ENCODE measurements at regions of chr19 and their contacts with region 1.

Region 1: GRCh38 chr19:17766543-17767131 is 15.4 kb downstream of the FCHO1 start:
- DNase-seq: peak; percentile 88
- ATAC-seq: peak; percentile 91
- H3K4me3 ChIP-seq: peak overlapping the region; percentile 42 to 50
- H3K27ac ChIP-seq: peak overlapping the region; percentile 39; the same call in 1 of the 2 replicates
- H3K4me1 ChIP-seq: peaks cover 20 to 32% of the 10 kb centered on the region in 2 experiments
- H3K27me3 ChIP-seq: no peaks in the 10 kb centered on the region
- CTCF ChIP-seq: peak; percentile 81 to 94 (median 93)
- POLR2A ChIP-seq: no peak
- RAD21 ChIP-seq: peak; percentile 98

Region 2: DNA sequence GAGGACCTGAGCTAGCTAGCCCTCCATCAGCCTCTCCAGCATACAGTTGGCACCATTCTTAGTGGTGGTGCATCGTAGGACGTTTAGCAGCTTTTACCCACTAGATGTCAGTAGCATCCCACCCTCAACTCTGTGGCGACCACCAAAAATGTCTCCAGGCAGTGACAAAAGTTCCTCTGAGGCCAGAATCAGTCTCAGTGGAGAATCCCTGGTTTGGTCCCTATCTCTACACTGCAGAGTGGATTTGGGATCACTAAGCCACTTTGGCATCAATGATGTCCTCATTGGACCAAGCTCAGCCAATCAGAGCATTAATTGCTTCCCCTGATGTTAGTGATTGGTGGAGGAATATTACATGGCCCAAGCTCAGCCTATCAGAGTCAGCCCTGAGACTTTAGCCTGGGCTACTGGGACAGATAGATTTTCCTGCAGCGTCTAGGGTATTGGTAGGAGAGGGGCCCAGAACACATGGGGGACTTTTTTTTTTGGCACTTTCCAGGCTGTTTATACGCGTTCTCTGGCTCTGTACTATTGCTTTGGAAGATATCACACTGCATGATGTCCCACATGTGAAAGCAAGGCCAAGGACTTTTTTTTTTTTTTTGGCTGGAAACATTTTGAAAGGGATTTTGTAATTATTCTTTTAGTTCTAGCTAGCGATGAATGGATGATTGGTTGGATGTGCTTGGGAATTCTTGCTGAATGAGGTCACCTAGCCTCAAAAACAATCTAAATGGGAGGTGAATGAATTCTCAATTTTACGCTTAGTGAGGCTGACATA is 325.2 kb before region 1 on chr19:
- CTCF ChIA-PET with region 1: interaction called, 4 read pairs
- POLR2A ChIA-PET with region 1: no interaction called
- RAD21 ChIA-PET with region 1: no interaction called
- intact Hi-C with region 1: loop called (anchors 5 kb)
- DNase-seq: no peak
- ATAC-seq: peak; percentile 92
- H3K4me3 ChIP-seq: no peak overlapping the region
- H3K27ac ChIP-seq: no peak overlapping the region
- H3K4me1 ChIP-seq: no peaks in the 10 kb centered on the region
- H3K27me3 ChIP-seq: no peaks in the 10 kb centered on the region
- CTCF ChIP-seq: peak; percentile 48 to 61 (median 52); a peak in 5 of 6 replicates
- POLR2A ChIP-seq: no peak
- RAD21 ChIP-seq: peak; percentile 75

Region 3: GRCh38 chr19:17590877-17591276 is 175.8 kb before region 1 on chr19:
- CTCF ChIA-PET with region 1: no interaction called
- POLR2A ChIA-PET with region 1: no interaction called
- RAD21 ChIA-PET with region 1: no interaction called
- intact Hi-C with region 1: loop called (anchors 5 kb)
- DNase-seq: no peak
- ATAC-seq: no peak
- H3K4me3 ChIP-seq: no peak overlapping the region
- H3K27ac ChIP-seq: no peak overlapping the region
- H3K4me1 ChIP-seq: no peaks in the 10 kb centered on the region
- H3K27me3 ChIP-seq: no peaks in the 10 kb centered on the region
- CTCF ChIP-seq: no peak
- POLR2A ChIP-seq: no peak
- RAD21 ChIP-seq: no peak

Region 4: GRCh38 chr19:17641181-17641580 is 125.5 kb before region 1 on chr19:
- CTCF ChIA-PET with region 1: no interaction called
- POLR2A ChIA-PET with region 1: no interaction called
- RAD21 ChIA-PET with region 1: no interaction called
- intact Hi-C with region 1: no loop called
- DNase-seq: no peak
- ATAC-seq: no peak
- H3K4me3 ChIP-seq: no peak overlapping the region
- H3K27ac ChIP-seq: no peak overlapping the region
- H3K4me1 ChIP-seq: no peaks in the 10 kb centered on the region
- H3K27me3 ChIP-seq: no peaks in the 10 kb centered on the region
- CTCF ChIP-seq: no peak
- POLR2A ChIP-seq: no peak
- RAD21 ChIP-seq: no peak

Region 5: GRCh38 chr19:17718947-17719711 is 47.5 kb before region 1 on chr19 and contains the start of gene MAP1S:
- CTCF ChIA-PET with region 1: interaction called, 4 read pairs
- POLR2A ChIA-PET with region 1: no interaction called
- RAD21 ChIA-PET with region 1: interaction called in 1 of 2 experiments, 4 read pairs
- intact Hi-C with region 1: loop called (anchors 5 kb)
- DNase-seq: no peak
- ATAC-seq: peak; percentile 84
- H3K4me3 ChIP-seq: peak within 1 kb of the TSS; percentile 91 to 97
- H3K27ac ChIP-seq: peak within 1 kb of the TSS; percentile 66
- H3K4me1 ChIP-seq: peaks cover 13 to 35% of the 10 kb centered on the region in 2 experiments
- H3K27me3 ChIP-seq: no peaks in the 10 kb centered on the region
- CTCF ChIP-seq: no peak
- POLR2A ChIP-seq: peak; percentile 68
- RAD21 ChIP-seq: no peak
- total RNA-seq, gene MAP1S: 80.8 TPM

Region 6: GRCh38 chr19:17794731-17795536 is 28.3 kb after region 1 on chr19 and contains the start of gene B3GNT3:
- CTCF ChIA-PET with region 1: interaction called, 10 read pairs
- POLR2A ChIA-PET with region 1: interaction called, 5 read pairs
- RAD21 ChIA-PET with region 1: no interaction called
- intact Hi-C with region 1: no loop called
- DNase-seq: peak; percentile 83
- ATAC-seq: peak; percentile 50
- H3K4me3 ChIP-seq: peak within 1 kb of the TSS; percentile 75 to 90
- H3K27ac ChIP-seq: peak within 1 kb of the TSS; percentile 84
- H3K4me1 ChIP-seq: peaks cover 64 to 92% of the 10 kb centered on the region in 2 experiments
- H3K27me3 ChIP-seq: no peaks in the 10 kb centered on the region
- CTCF ChIP-seq: no peak
- POLR2A ChIP-seq: peak; percentile 42
- RAD21 ChIP-seq: no peak
- total RNA-seq, gene B3GNT3: 22.2 TPM

Measured in HCT116 (cell line).